Caco-2 (cell line): ENCODE measurements at regions of chr10 and their contacts with region 1.

Region 1: DNA sequence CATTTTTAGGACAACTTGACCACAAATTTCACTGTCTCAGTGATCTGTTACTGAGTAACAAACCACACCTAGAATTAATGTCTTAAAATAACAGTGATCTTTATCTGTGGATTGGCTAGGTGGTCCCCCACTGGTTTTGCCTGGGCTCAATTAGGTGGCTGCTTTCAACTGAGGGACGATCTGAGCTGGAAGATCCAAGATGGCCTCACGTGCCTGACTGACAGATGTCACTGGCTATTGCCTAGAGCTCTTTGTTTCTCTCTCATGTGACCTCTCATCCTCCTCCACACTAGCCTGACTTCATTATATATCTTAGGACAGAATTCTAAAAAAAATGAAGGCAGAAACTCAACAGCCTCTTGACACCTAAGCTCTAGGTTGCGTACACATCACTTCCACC is 59.7 kb downstream of the HACD1 start:
- DNase-seq: no peak
- H3K4me3 ChIP-seq: no peak overlapping the region
- H3K4me3 Mint-ChIP-seq: no peak overlapping the region
- H3K27ac Mint-ChIP-seq: no peak overlapping the region
- H3K4me1 ChIP-seq: no peaks in the 10 kb centered on the region
- H3K4me1 Mint-ChIP-seq: no peaks in the 10 kb centered on the region
- H3K27me3 ChIP-seq: no peaks in the 10 kb centered on the region
- H3K27me3 Mint-ChIP-seq: no peaks in the 10 kb centered on the region
- CTCF ChIP-seq: no peak

Region 2: DNA sequence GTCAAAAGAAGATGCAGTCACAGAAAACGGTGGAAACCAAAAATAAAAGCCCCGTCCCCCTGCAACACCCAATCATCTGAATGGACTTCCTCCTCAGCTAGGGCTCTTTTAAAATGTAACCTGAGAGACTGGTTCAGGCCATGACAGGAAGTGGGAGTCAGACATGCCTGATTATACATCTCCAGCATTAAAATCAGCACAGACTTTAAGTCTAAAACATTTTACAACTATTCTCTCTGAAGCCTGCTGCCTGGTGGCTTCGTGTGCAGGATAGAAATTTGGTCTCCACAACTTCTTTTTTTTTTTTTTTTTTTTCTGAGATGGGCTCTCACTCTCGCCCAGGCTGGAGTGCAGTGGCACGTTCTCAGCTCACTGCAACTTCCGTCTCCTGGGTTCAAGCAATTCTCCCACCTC is 29.4 kb after region 1 on chr10:
- CTCF ChIA-PET with region 1: no interaction called
- POLR2A ChIA-PET with region 1: no interaction called
- intact Hi-C with region 1: loop called (anchors 2 kb)
- DNase-seq: no peak
- H3K4me3 ChIP-seq: no peak overlapping the region
- H3K4me3 Mint-ChIP-seq: peak overlapping the region; percentile 55
- H3K27ac Mint-ChIP-seq: peak overlapping the region; percentile 76
- H3K4me1 ChIP-seq: peaks cover 38% of the 10 kb centered on the region
- H3K4me1 Mint-ChIP-seq: peaks cover 22% of the 10 kb centered on the region
- H3K27me3 ChIP-seq: no peaks in the 10 kb centered on the region
- H3K27me3 Mint-ChIP-seq: no peaks in the 10 kb centered on the region
- CTCF ChIP-seq: no peak